ENCODE measurements at regions of chr10 and their contacts with region 1.

Region 1: GRCh38 chr10:61992671-61993668 is 91.5 kb downstream of the ARID5B start:
- DNase-seq: peak in 1 of 2 donors; percentile 73
- ATAC-seq: peak; percentile 92
- H3K4me3 ChIP-seq: peak overlapping the region in 1 of 2 donors; percentile 41
- H3K27ac ChIP-seq: peak overlapping the region; percentile 82 to 85
- H3K4me1 ChIP-seq: peaks cover 6% of the 10 kb centered on the region in 2 donors
- H3K27me3 ChIP-seq: no peaks in the 10 kb centered on the region

Region 2: GRCh38 chr10:61943674-61944410 is 49.1 kb before region 1 on chr10:
- intact Hi-C with region 1: loop called in 1 of 2 experiments (anchors 5 kb)
- DNase-seq: no peak
- ATAC-seq: peak; percentile 63
- H3K4me3 ChIP-seq: no peak overlapping the region
- H3K27ac ChIP-seq: no peak overlapping the region
- H3K4me1 ChIP-seq: peaks cover 0 to 11% of the 10 kb centered on the region in 2 donors
- H3K27me3 ChIP-seq: no peaks in the 10 kb centered on the region

Region 3: GRCh38 chr10:62038609-62039190 is 45.7 kb after region 1 on chr10:
- intact Hi-C with region 1: loop called (anchors 5 kb)
- DNase-seq: peak; percentile 74 to 84
- ATAC-seq: peak; percentile 76
- H3K4me3 ChIP-seq: peak overlapping the region in 1 of 2 donors; percentile 26
- H3K27ac ChIP-seq: peak overlapping the region; percentile 44 to 64
- H3K4me1 ChIP-seq: peaks cover 5 to 8% of the 10 kb centered on the region in 2 donors
- H3K27me3 ChIP-seq: no peaks in the 10 kb centered on the region

Region 4: GRCh38 chr10:62067560-62067959 is 74.6 kb after region 1 on chr10:
- intact Hi-C with region 1: loop called in 1 of 2 experiments (anchors 1 kb)
- DNase-seq: no peak
- ATAC-seq: no peak
- H3K4me3 ChIP-seq: no peak overlapping the region
- H3K27ac ChIP-seq: no peak overlapping the region
- H3K4me1 ChIP-seq: peaks cover 8 to 10% of the 10 kb centered on the region in 2 donors
- H3K27me3 ChIP-seq: no peaks in the 10 kb centered on the region

Region 5: DNA sequence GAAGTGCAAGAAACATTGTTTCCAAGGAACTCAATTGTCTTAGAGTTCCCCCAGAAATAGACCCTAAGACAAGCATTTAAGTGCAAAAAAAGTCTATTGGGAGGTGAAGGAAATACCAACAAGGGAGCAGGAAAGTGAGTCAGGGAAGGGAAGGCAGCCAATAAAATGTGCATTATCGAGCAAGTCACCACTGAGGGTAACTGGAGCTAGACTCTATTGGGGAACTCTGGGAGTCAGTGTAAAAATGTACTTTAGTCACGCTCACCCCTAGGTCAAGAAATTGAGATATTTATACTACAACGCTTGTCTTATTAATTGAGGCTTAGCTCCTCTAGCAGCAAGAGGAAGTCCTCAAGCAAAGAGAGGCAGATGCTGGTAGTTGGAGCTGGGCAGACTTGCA is 138.0 kb after region 1 on chr10:
- intact Hi-C with region 1: no loop called
- DNase-seq: no peak
- ATAC-seq: peak; percentile 52
- H3K4me3 ChIP-seq: no peak overlapping the region
- H3K27ac ChIP-seq: no peak overlapping the region
- H3K4me1 ChIP-seq: no peaks in the 10 kb centered on the region
- H3K27me3 ChIP-seq: no peaks in the 10 kb centered on the region